Dorsolateral prefrontal cortex (tissue), 120 donors: ENCODE measurements at regions of chr6 and their contacts with region 1.

Region 1: GRCh38 chr6:88975369-88975768 is 12.0 kb upstream of the RNGTT start:
- DNase-seq: no peak
- H3K4me3 ChIP-seq: no peak overlapping the region
- H3K27ac ChIP-seq: no peak overlapping the region
- H3K27me3 ChIP-seq: no peaks in the 10 kb centered on the region
- CTCF ChIP-seq: no peak

Region 2: GRCh38 chr6:88922775-88923548 is 52.4 kb before region 1 on chr6:
- intact Hi-C with region 1: no loop called
- DNase-seq: no peak
- H3K4me3 ChIP-seq: no peak overlapping the region
- H3K27ac ChIP-seq: no peak overlapping the region
- H3K27me3 ChIP-seq: no peaks in the 10 kb centered on the region
- CTCF ChIP-seq: no peak

Region 3: GRCh38 chr6:89013438-89013837 is 38.1 kb after region 1 on chr6:
- intact Hi-C with region 1: no loop called
- DNase-seq: no peak
- H3K4me3 ChIP-seq: no peak overlapping the region
- H3K27ac ChIP-seq: no peak overlapping the region
- H3K27me3 ChIP-seq: no peaks in the 10 kb centered on the region
- CTCF ChIP-seq: no peak

Region 4: GRCh38 chr6:89597988-89598692 is 622.8 kb after region 1 on chr6:
- intact Hi-C with region 1: loop called in 1 of 2 experiments (anchors 10 kb)
- DNase-seq: no peak
- H3K4me3 ChIP-seq: no peak overlapping the region
- H3K27ac ChIP-seq: no peak overlapping the region
- H3K27me3 ChIP-seq: no peaks in the 10 kb centered on the region
- CTCF ChIP-seq: peak in 30 of 56 donors; percentile 13 to 54 (median 32)

Region 5: GRCh38 chr6:90383196-90383822 is 1407.9 kb after region 1 on chr6:
- intact Hi-C with region 1: no loop called
- DNase-seq: no peak
- H3K4me3 ChIP-seq: no peak overlapping the region
- H3K27ac ChIP-seq: no peak overlapping the region
- H3K27me3 ChIP-seq: peaks cover 0 to 5% (median 0%) of the 10 kb centered on the region in 45 donors
- CTCF ChIP-seq: no peak